Activated naive CD4-positive, alpha-beta T cell treated with anti-CD3 and anti-CD28 coated beads for 36 hours (primary cell): ENCODE measurements at regions of chr14 and their contacts with region 1.

Region 1: GRCh38 chr14:93137864-93138263 is 22.1 kb upstream of the ITPK1 start:
- DNase-seq: no peak
- H3K4me3 Mint-ChIP-seq: no peak overlapping the region
- H3K27ac Mint-ChIP-seq: no peak overlapping the region
- H3K4me1 Mint-ChIP-seq: peaks cover 2% of the 10 kb centered on the region
- H3K27me3 Mint-ChIP-seq: no peaks in the 10 kb centered on the region

Region 2: DNA sequence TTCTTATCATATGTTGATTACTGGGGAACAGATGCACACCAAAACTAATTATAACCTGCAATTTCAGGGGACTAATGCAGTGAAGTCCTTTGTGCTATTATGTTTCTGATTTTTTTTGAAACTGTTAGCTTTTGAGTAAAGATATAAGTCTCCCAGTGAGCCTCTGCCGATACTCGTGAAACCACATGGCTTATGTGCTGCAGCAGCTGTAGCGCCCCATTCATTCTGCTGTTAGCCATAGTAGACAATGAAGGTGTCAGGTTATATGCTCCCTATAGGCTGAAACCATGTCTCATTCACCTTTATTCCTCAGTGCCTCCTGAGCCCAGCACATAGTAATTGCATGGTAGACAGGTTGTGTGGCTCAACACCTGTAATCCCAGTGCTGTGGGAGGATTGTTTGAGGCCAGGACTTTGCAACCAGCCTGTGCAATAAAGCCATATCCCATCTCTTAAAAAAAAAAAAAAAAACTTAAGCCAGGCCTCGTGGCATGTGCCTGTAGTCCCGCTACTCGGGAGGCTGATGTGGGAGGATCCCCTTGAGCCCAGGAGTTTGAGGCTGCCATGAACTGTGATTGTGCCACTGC is 318.8 kb before region 1 on chr14:
- CTCF ChIA-PET with region 1: no interaction called
- intact Hi-C with region 1: no loop called
- DNase-seq: no peak
- H3K4me3 Mint-ChIP-seq: no peak overlapping the region
- H3K27ac Mint-ChIP-seq: no peak overlapping the region
- H3K4me1 Mint-ChIP-seq: no peaks in the 10 kb centered on the region
- H3K27me3 Mint-ChIP-seq: no peaks in the 10 kb centered on the region

Region 3: GRCh38 chr14:93033983-93034670 is 103.7 kb before region 1 on chr14:
- CTCF ChIA-PET with region 1: no interaction called
- intact Hi-C with region 1: loop called (anchors 2 kb)
- DNase-seq: peak; percentile 44
- H3K4me3 Mint-ChIP-seq: no peak overlapping the region
- H3K27ac Mint-ChIP-seq: no peak overlapping the region
- H3K4me1 Mint-ChIP-seq: peaks cover 19% of the 10 kb centered on the region
- H3K27me3 Mint-ChIP-seq: no peaks in the 10 kb centered on the region

Region 4: GRCh38 chr14:93219103-93219726 is 81.4 kb after region 1 on chr14:
- CTCF ChIA-PET with region 1: no interaction called
- intact Hi-C with region 1: loop called (anchors 1 kb)
- DNase-seq: peak; percentile 58
- H3K4me3 Mint-ChIP-seq: no peak overlapping the region
- H3K27ac Mint-ChIP-seq: no peak overlapping the region
- H3K4me1 Mint-ChIP-seq: no peaks in the 10 kb centered on the region
- H3K27me3 Mint-ChIP-seq: no peaks in the 10 kb centered on the region